ENCODE measurements at regions of chr5 and their contacts with region 1.

Region 1: GRCh38 chr5:10563945-10564837 is at the start of gene ANKRD33B:
- DNase-seq: peak; percentile 44 to 85 (median 66)
- ATAC-seq: peak; percentile 91
- H3K4me3 ChIP-seq: peak within 1 kb of the TSS; percentile 56
- H3K4me3 Mint-ChIP-seq: peak within 1 kb of the TSS; percentile 67 to 95 (median 85)
- H3K27ac ChIP-seq: peak within 1 kb of the TSS; percentile 72
- H3K27ac Mint-ChIP-seq: peak within 1 kb of the TSS in 2 of 9 donors; percentile 57 to 86
- H3K4me1 ChIP-seq: peaks cover 0 to 13% of the 10 kb centered on the region in 2 donors
- H3K4me1 Mint-ChIP-seq: peaks cover 6 to 28% (median 17%) of the 10 kb centered on the region in 7 donors
- H3K27me3 ChIP-seq: no peaks in the 10 kb centered on the region
- H3K27me3 Mint-ChIP-seq: peaks cover 0 to 30% (median 0%) of the 10 kb centered on the region in 5 donors
- total RNA-seq, gene ANKRD33B: 0.30 to 10.1 (median 1.0) TPM

Region 2: DNA sequence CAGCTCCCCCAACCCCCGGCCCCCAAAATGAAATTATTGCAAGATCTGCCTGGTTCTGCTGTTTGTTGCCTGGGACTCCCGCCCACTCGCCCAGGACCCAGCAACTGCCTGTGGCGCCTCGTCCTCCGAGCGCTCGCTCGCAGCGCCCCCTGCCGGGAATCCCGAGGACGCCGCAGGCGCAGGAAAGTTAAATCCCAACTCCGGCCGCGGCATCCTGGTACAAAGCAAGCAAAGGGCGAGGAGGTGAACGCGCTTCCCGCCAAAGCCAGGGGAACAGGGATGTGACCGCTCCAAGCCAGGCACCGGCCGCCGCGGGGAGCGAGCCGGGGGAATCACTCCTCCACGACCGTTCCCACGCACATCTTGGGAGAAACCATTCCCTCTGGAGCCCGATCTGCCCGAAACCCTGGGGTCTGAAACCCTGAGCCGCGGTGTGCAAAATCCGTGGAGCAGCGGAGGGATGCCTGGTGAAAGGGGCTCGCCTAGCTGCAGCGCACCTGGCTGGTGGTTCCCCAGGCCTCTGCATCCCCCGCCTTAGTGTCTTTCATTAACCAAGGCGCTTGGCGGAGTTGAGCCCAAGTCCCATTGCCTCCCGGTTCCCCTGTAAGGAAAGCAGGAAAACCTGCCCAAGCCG is 1019.6 kb before region 1 on chr5:
- CTCF ChIA-PET with region 1: no interaction called
- POLR2A ChIA-PET with region 1: no interaction called
- intact Hi-C with region 1: loop called in 1 of 2 experiments (anchors 10 kb)
- DNase-seq: peak in 6 of 9 donors; percentile 4 to 52 (median 23)
- ATAC-seq: peak; percentile 42
- H3K4me3 ChIP-seq: no peak overlapping the region
- H3K4me3 Mint-ChIP-seq: peak overlapping the region; percentile 44 to 82 (median 66)
- H3K27ac ChIP-seq: no peak overlapping the region
- H3K27ac Mint-ChIP-seq: peak overlapping the region in 1 of 9 donors; percentile 0
- H3K4me1 ChIP-seq: no peaks in the 10 kb centered on the region
- H3K4me1 Mint-ChIP-seq: peaks cover 0 to 16% (median 11%) of the 10 kb centered on the region in 7 donors
- H3K27me3 ChIP-seq: no peaks in the 10 kb centered on the region
- H3K27me3 Mint-ChIP-seq: peaks cover 29 to 45% (median 31%) of the 10 kb centered on the region in 5 donors

Region 3: GRCh38 chr5:10441083-10441991 is 122.9 kb before region 1 on chr5 and contains the start of gene ROPN1L:
- CTCF ChIA-PET with region 1: no interaction called
- POLR2A ChIA-PET with region 1: no interaction called
- intact Hi-C with region 1: loop called (anchors 1 to 5 kb)
- DNase-seq: peak; percentile 64 to 89 (median 75)
- ATAC-seq: peak; percentile 97
- H3K4me3 ChIP-seq: peak within 1 kb of the TSS; percentile 97
- H3K4me3 Mint-ChIP-seq: peak within 1 kb of the TSS; percentile 83 to 94 (median 87)
- H3K27ac ChIP-seq: peak within 1 kb of the TSS; percentile 68
- H3K27ac Mint-ChIP-seq: peak within 1 kb of the TSS in 8 of 9 donors; percentile 31 to 82 (median 68)
- H3K4me1 ChIP-seq: peaks cover 35 to 44% of the 10 kb centered on the region in 2 donors
- H3K4me1 Mint-ChIP-seq: peaks cover 36 to 58% (median 49%) of the 10 kb centered on the region in 7 donors
- H3K27me3 ChIP-seq: no peaks in the 10 kb centered on the region
- H3K27me3 Mint-ChIP-seq: peaks cover 0 to 7% (median 0%) of the 10 kb centered on the region in 5 donors
- total RNA-seq, gene ROPN1L: 0.32 to 2.6 (median 0.61) TPM

Region 4: GRCh38 chr5:10595678-10596309 is 31.6 kb after region 1 on chr5:
- CTCF ChIA-PET with region 1: interaction called, 3 read pairs
- POLR2A ChIA-PET with region 1: no interaction called
- intact Hi-C with region 1: loop called in 1 of 2 experiments (anchors 5 kb)
- DNase-seq: peak in 1 of 9 donors; percentile 48
- ATAC-seq: peak; percentile 31
- H3K4me3 ChIP-seq: no peak overlapping the region
- H3K4me3 Mint-ChIP-seq: peak overlapping the region in 7 of 10 donors; percentile 5 to 59 (median 28)
- H3K27ac ChIP-seq: no peak overlapping the region
- H3K27ac Mint-ChIP-seq: peak overlapping the region in 1 of 9 donors; percentile 14
- H3K4me1 ChIP-seq: no peaks in the 10 kb centered on the region
- H3K4me1 Mint-ChIP-seq: peaks cover 4 to 59% (median 8%) of the 10 kb centered on the region in 7 donors
- H3K27me3 ChIP-seq: no peaks in the 10 kb centered on the region
- H3K27me3 Mint-ChIP-seq: peaks cover 0 to 8% (median 6%) of the 10 kb centered on the region in 5 donors

Region 5: GRCh38 chr5:10761166-10761932 is 197.2 kb after region 1 on chr5 and contains the start of gene DAP:
- CTCF ChIA-PET with region 1: no interaction called
- POLR2A ChIA-PET with region 1: no interaction called
- intact Hi-C with region 1: loop called (anchors 1 kb)
- DNase-seq: peak; percentile 86 to 97 (median 92)
- ATAC-seq: peak; percentile 93
- H3K4me3 ChIP-seq: peak within 1 kb of the TSS; percentile 73
- H3K4me3 Mint-ChIP-seq: peak within 1 kb of the TSS; percentile 89 to 96 (median 92)
- H3K27ac ChIP-seq: peak within 1 kb of the TSS; percentile 83
- H3K27ac Mint-ChIP-seq: peak within 1 kb of the TSS; percentile 82 to 97 (median 89)
- H3K4me1 ChIP-seq: peaks cover 15 to 16% of the 10 kb centered on the region in 2 donors
- H3K4me1 Mint-ChIP-seq: peaks cover 14 to 60% (median 54%) of the 10 kb centered on the region in 7 donors
- H3K27me3 ChIP-seq: no peaks in the 10 kb centered on the region
- H3K27me3 Mint-ChIP-seq: peaks cover 0 to 14% (median 0%) of the 10 kb centered on the region in 5 donors
- total RNA-seq, gene DAP: 31.9 to 58.6 (median 38.5) TPM